CD4-positive, alpha-beta T cell (primary cell): ENCODE measurements at regions of chr6 and their contacts with region 1.

Region 1: DNA sequence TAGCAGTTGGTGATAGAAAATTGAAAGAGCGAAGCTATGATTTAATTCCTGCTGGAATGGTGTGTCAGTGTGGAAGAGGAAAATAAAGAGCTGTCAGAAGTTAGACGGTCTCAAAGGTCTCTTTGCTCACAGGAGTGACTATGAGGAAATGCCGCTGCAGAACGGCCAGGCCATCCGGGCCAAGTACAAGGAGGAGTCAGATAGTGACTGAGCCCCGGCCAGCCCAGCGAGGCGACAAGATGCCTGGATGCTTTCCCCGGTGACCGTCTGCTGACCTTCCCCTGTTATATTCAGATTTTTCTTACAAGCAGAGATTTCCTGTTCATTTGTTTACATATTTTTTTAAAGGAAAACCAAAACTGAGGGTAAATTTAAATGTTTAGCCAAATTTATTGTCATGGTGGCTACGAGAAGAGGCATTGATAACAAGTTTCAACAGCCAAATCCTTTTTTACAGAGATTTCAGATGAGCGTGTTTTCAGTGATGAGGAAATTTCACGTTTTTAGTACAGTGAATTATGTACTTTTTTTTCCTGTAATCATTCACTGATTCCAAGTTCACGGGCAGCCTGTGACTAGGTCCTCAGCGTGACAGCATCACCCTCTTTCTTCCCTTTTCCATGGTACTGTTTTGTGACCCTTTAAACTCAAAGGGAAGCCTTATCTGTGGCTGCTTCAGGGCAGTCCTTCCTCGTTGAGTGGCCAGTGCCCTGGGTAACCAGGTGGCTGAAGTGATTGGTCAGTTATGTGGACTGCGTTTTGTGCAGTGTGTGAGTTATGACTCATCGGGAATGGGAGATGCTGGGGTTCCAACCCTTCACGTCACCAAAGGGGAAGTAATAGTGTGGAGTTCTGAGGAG is 12.6 kb downstream of the DYNLT1 start:
- DNase-seq: peak in 2 of 14 experiments; percentile 44 to 52
- ATAC-seq: no peak
- H3K4me3 ChIP-seq: no peak overlapping the region
- H3K4me3 Mint-ChIP-seq: no peak overlapping the region
- H3K27ac ChIP-seq: peak overlapping the region; percentile 15 to 26
- H3K27ac Mint-ChIP-seq: peak overlapping the region; percentile 79
- H3K4me1 ChIP-seq: peaks cover 29% of the 10 kb centered on the region
- H3K4me1 Mint-ChIP-seq: peaks cover 49% of the 10 kb centered on the region
- H3K27me3 ChIP-seq: no peaks in the 10 kb centered on the region
- H3K27me3 Mint-ChIP-seq: no peaks in the 10 kb centered on the region
- CTCF ChIP-seq: no peak

Region 2: DNA sequence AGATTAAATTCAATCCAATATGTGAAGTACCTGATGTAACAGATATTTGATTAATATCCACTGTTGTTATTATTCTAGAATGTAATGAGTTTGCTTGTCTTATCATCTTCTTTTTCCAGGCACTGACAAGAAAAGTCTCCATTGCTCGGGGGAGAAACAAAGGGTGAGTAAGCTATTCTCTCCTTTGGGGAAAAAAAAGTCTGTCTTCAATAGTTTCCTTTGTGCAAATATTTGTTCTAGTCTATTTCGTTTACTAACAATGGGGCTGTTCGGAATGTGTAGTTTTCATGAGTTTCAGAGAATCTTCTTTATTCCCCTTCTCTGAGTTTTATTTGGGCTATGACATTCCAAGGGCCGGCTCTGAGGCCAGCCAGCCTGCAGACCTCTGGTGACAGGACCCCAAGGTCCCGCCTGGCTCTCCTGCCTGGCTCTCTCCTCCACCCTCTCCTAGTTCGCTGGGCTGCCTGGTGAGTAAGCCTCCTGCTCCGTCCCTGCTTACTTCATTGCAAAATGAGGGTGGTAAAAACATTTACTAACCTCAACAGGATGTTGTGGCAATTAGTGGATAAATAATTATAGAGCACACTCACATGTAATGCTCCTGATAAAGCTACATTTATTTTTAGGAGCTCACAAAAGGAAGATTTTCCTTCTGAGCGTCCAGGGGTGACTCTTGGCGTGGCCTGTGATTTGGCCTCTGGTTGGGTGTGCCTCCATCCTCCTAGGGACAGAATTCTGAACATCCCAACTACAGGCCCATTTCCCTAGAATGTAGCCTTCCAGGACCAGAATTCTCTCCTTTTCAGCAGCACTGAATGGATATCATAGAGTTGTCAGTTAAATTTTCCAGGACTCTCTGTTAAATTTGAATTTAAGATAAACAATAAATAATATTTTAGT is 852.0 kb before region 1 on chr6:
- CTCF ChIA-PET with region 1: no interaction called
- POLR2A ChIA-PET with region 1: no interaction called
- intact Hi-C with region 1: no loop called
- DNase-seq: no peak
- ATAC-seq: no peak
- H3K4me3 ChIP-seq: no peak overlapping the region
- H3K4me3 Mint-ChIP-seq: no peak overlapping the region
- H3K27ac ChIP-seq: no peak overlapping the region
- H3K27ac Mint-ChIP-seq: no peak overlapping the region
- H3K4me1 ChIP-seq: no peaks in the 10 kb centered on the region
- H3K4me1 Mint-ChIP-seq: no peaks in the 10 kb centered on the region
- H3K27me3 ChIP-seq: no peaks in the 10 kb centered on the region
- H3K27me3 Mint-ChIP-seq: no peaks in the 10 kb centered on the region
- CTCF ChIP-seq: no peak

Region 3: DNA sequence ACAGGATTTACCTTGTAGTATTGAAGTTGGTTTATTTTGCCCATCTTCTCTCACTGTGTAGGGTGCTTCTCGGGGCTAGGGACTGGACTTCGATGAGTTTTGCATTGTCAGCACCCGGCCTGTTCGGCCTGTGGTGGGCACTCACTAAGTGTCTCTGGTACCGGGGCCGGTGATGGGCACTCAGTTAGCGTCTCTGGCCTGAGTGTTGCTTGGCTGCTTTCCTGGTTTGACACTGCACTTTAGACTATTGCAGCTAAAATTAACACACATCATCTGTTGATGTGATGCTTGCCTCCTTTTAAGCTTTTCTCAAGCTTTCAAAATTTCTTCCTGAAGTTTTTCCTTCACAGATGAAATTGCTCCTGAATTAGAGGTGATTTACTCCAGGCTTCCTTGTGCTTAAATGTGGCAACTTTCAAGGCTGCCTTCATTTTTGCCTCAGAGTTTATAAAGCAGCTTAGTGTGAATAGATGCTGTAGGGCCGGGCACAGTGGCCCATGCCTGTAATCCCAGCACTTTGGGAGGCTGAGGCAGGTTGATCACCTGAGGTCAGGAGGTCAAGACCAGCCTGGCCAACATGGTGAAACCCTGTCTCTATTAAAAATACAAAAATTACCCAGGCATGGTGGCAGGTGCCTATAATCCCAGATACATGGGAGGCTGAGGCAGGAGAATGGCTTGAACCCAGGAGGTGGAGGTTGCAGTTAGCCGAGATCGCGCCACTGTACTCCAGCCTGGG is 361.4 kb before region 1 on chr6:
- CTCF ChIA-PET with region 1: no interaction called
- POLR2A ChIA-PET with region 1: no interaction called
- intact Hi-C with region 1: no loop called
- DNase-seq: peak in 1 of 14 experiments; percentile 8
- ATAC-seq: no peak
- H3K4me3 ChIP-seq: no peak overlapping the region
- H3K4me3 Mint-ChIP-seq: peak overlapping the region; percentile 21
- H3K27ac ChIP-seq: peak overlapping the region; percentile 10 to 30
- H3K27ac Mint-ChIP-seq: peak overlapping the region; percentile 74
- H3K4me1 ChIP-seq: peaks cover 16% of the 10 kb centered on the region
- H3K4me1 Mint-ChIP-seq: peaks cover 34% of the 10 kb centered on the region
- H3K27me3 ChIP-seq: no peaks in the 10 kb centered on the region
- H3K27me3 Mint-ChIP-seq: no peaks in the 10 kb centered on the region
- CTCF ChIP-seq: no peak

Region 4: DNA sequence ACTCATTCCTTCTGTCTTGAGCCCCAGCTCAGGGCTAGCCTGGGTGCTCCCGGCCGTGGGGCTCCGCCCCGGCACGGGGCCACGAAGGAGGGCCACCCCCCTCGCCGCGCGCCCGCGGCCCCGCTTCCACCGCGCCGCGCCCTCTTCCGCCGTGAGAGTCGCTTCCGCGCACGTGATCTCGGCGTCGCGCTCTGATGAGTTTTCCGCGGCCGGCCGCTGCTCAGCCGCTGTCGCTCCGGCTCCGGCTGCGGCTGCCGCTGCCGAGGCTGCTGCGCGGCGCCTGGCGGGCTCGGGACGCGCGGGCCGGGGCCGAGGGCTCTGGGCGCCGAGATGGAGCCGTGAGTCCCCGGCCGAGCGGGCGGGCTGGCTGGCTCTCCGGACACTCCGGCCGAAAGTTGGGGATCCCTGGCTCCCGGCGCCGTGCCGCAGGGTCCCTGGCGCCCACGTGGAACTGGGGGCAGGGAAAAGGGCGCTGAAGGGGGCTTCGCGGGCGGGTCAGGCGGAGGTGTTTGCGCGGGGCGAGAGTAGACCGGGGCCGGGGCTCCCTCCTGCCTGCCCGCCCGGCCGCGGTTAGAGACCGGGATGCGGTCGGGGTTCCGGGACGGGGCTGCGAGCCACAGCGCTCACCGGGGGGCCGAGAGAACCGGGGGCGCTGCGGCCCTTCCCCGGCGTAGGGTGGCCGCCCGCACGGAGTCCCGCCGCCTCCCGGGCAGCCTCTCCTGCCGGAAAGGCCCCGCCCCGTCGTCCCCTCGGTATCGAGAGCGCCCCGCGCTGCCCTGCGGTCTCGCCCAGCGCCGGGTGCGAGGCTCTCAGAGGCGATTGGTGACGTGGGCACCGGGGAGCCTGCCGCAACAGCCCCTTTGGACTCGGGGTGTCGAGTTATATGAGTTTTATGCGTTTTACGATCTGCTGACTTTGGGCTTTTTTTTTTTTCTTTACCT is 71.7 kb before region 1 on chr6 and contains the start of gene TMEM181:
- CTCF ChIA-PET with region 1: no interaction called
- POLR2A ChIA-PET with region 1: no interaction called
- intact Hi-C with region 1: loop called in 1 of 2 experiments (anchors 5 kb)
- DNase-seq: peak; percentile 76 to 96 (median 86)
- ATAC-seq: peak; percentile 91
- H3K4me3 ChIP-seq: peak within 1 kb of the TSS; percentile 79
- H3K4me3 Mint-ChIP-seq: peak within 1 kb of the TSS; percentile 96
- H3K27ac ChIP-seq: peak within 1 kb of the TSS; percentile 59 to 78
- H3K27ac Mint-ChIP-seq: peak within 1 kb of the TSS; percentile 87
- H3K4me1 ChIP-seq: peaks cover 52% of the 10 kb centered on the region
- H3K4me1 Mint-ChIP-seq: peaks cover 48% of the 10 kb centered on the region
- H3K27me3 ChIP-seq: no peaks in the 10 kb centered on the region
- H3K27me3 Mint-ChIP-seq: no peaks in the 10 kb centered on the region
- CTCF ChIP-seq: no peak
- total RNA-seq, gene TMEM181: 10.2 to 10.9 TPM